ENCODE measurements at regions of chr17 and their contacts with region 1.

Region 1: DNA sequence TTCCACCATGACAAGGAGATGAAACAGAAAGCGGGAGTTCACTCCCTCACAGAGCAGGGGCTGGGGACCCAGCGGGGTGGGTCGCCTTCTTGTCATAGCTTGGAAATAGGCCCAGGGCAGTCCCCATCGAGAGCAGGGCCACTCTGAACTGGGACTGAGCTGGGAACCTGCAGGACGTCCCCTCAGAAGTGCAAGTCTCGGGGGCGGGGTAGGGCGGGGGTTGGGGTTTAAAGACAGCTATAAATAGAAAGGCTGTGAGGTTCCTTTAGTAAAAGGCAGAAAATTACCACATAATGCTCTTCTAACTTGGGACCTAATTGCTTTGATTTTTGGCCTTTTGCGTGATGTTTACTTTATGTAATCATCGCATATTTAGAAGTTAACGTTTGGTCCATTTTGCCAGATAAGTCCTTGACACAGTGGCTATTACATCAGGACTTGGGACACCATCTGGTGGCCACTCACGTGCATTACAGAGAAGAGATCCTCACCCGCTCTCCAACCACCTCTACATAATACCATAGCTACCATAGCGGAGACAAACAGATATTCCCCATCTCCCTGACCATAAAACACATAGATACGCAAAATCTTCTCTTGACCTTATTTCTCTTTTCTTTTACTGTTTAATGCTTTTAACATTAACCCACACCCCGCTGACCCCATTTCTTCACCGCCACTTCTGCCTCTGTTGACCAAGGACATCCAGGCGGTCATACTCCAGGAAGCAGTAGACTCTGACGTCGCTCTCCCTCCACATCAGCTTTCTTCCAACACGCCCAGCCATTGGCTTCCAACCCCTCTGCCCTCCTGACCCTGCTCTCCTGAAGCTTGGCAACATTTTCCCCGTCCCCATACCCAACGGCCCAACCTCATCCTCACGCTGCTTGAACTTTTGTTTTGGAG is 27.5 kb upstream of the PIK3R6 start:
- DNase-seq: peak; percentile 43
- H3K4me3 ChIP-seq: no peak overlapping the region
- CTCF ChIP-seq: peak; percentile 89

Region 2: DNA sequence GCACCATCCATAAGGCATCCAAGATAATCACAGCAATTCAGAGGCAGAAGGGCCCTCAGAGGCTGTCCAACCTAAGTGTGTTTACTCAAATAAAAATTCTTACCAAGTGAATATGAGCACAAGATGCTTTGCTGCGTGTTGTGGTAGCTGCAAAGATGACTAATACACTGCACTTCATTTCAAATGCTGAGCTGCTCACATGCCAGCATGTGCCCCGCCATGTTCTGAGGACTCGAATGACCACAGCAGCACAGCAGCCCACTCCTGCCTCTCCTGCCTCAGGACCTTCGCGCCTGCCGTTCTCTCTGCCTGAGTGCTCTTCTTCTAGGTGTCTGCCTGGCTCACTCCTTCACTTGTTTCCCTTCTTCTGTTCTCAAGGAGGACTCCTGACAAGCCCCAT is 51.5 kb after region 1 on chr17:
- in situ Hi-C with region 1: loop called (anchors 5 kb)
- DNase-seq: no peak
- H3K4me3 ChIP-seq: no peak overlapping the region
- CTCF ChIP-seq: no peak